ENCODE measurements at regions of chr11 and their contacts with region 1.

Region 1: GRCh38 chr11:134559602-134559962 is 147.5 kb upstream of the B3GAT1 start:
- DNase-seq: peak in 1 of 2 experiments; percentile 21
- H3K4me3 ChIP-seq: no peak overlapping the region
- H3K4me3 Mint-ChIP-seq: no peak overlapping the region
- H3K27ac Mint-ChIP-seq: no peak overlapping the region
- H3K4me1 ChIP-seq: no peaks in the 10 kb centered on the region
- H3K4me1 Mint-ChIP-seq: no peaks in the 10 kb centered on the region
- H3K27me3 ChIP-seq: no peaks in the 10 kb centered on the region
- H3K27me3 Mint-ChIP-seq: peaks cover 2% of the 10 kb centered on the region
- CTCF ChIP-seq: no peak

Region 2: DNA sequence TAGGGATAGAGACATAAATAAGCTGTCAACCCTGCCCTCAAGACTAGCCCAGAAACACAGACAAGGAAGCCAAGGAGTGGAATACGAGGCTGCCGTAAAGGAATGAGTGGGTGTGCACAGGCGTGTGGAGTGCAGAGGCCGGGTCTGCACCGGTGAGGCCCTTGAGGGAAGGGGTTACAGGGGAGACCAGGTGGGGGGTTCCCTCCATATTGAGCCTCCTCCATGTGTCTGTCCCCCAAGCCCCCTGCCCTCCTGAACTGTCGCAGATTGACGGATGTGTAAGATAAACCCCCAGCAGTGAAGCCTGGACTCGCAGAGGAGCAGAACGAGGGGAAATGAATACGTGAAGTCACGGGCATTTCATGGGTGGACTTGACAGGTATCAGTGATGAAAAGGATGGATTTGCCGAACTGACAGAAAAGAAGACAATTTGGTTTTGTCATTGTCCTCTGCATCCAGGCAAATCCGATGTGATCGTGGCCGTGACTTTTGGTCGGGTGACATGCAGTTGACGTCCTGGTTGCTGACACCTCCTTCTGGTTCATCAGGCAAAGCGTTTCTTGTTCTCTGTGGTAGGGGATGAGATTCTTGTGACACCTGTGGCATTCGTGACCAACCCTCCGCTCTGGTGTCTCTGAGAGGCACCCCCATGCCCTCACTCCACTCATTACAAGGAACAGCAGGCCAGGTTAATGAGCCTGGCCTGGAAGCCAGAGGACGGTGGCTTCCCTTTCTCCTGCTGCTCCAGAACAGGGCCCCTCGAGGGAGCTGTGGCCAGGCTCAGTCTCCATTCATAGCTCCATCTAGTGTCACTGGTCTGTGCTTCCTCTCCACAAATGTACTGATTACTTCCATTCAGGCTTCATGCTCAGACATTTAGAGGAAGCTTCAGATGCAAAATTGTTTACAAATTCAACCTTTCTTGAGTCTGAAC is 75.6 kb after region 1 on chr11:
- CTCF ChIA-PET with region 1: no interaction called
- POLR2A ChIA-PET with region 1: no interaction called
- intact Hi-C with region 1: loop called (anchors 2 kb)
- DNase-seq: peak; percentile 37 to 42
- H3K4me3 ChIP-seq: no peak overlapping the region
- H3K4me3 Mint-ChIP-seq: no peak overlapping the region
- H3K27ac Mint-ChIP-seq: no peak overlapping the region
- H3K4me1 ChIP-seq: no peaks in the 10 kb centered on the region
- H3K4me1 Mint-ChIP-seq: no peaks in the 10 kb centered on the region
- H3K27me3 ChIP-seq: no peaks in the 10 kb centered on the region
- H3K27me3 Mint-ChIP-seq: no peaks in the 10 kb centered on the region
- CTCF ChIP-seq: peak; percentile 12 to 55

Measured in Caco-2 (cell line).